ENCODE measurements at regions of chr1 and their contacts with region 1.

Region 1: DNA sequence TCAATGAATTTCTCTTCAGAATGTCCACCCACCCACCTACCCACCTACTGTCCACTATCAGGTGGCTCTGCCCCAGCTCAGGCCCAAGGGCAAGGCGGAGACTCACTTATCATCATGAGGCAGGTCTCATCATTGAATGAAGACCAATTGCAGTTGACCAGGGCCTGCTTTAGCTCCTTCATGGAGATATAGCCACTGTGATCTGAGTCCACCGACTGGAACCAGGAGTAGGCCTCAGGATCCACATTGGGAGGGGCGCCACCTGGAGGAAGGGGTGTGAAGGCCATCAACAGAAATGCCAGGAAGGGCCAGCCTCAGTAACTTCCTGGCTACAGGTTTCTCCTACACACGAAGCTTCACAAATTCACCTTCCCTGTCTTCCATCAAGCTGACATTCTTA is 11.6 kb downstream of the PEF1 start:
- DNase-seq: peak; percentile 33
- ATAC-seq: no peak
- H3K4me3 Mint-ChIP-seq: no peak overlapping the region
- H3K27ac Mint-ChIP-seq: no peak overlapping the region
- H3K4me1 Mint-ChIP-seq: peaks cover 13% of the 10 kb centered on the region
- H3K27me3 Mint-ChIP-seq: no peaks in the 10 kb centered on the region

Region 2: GRCh38 chr1:31644560-31645273 is 11.7 kb after region 1 on chr1 and contains the start of gene PEF1:
- CTCF ChIA-PET with region 1: interaction called, 10 read pairs
- POLR2A ChIA-PET with region 1: interaction called, 10 read pairs
- DNase-seq: peak; percentile 99
- ATAC-seq: peak; percentile 84
- H3K4me3 Mint-ChIP-seq: peak within 1 kb of the TSS; percentile 91
- H3K27ac Mint-ChIP-seq: peak within 1 kb of the TSS; percentile 100
- H3K4me1 Mint-ChIP-seq: peaks cover 26% of the 10 kb centered on the region
- H3K27me3 Mint-ChIP-seq: no peaks in the 10 kb centered on the region
- total RNA-seq, gene PEF1: 55.2 to 58.0 TPM

Measured in activated CD8-positive, alpha-beta T cell treated with anti-CD3 and anti-CD28 coated beads, Interleukin-2, amount 10 ng/mL, durations not matched to agents 7 days and 5 days (primary cell).